IMR-90 (cell line): ENCODE measurements at regions of chr11 and their contacts with region 1.

Region 1: GRCh38 chr11:114262681-114263512 is 33.3 kb upstream of the NNMT start:
- DNase-seq: peak; percentile 54
- ATAC-seq: peak; percentile 91
- H3K4me3 ChIP-seq: no peak overlapping the region
- H3K27ac ChIP-seq: no peak overlapping the region
- H3K4me1 ChIP-seq: no peaks in the 10 kb centered on the region
- H3K27me3 ChIP-seq: peaks cover 43% of the 10 kb centered on the region
- CTCF ChIP-seq: peak; percentile 73
- POLR2A ChIP-seq: no peak
- RAD21 ChIP-seq: peak; percentile 83

Region 2: DNA sequence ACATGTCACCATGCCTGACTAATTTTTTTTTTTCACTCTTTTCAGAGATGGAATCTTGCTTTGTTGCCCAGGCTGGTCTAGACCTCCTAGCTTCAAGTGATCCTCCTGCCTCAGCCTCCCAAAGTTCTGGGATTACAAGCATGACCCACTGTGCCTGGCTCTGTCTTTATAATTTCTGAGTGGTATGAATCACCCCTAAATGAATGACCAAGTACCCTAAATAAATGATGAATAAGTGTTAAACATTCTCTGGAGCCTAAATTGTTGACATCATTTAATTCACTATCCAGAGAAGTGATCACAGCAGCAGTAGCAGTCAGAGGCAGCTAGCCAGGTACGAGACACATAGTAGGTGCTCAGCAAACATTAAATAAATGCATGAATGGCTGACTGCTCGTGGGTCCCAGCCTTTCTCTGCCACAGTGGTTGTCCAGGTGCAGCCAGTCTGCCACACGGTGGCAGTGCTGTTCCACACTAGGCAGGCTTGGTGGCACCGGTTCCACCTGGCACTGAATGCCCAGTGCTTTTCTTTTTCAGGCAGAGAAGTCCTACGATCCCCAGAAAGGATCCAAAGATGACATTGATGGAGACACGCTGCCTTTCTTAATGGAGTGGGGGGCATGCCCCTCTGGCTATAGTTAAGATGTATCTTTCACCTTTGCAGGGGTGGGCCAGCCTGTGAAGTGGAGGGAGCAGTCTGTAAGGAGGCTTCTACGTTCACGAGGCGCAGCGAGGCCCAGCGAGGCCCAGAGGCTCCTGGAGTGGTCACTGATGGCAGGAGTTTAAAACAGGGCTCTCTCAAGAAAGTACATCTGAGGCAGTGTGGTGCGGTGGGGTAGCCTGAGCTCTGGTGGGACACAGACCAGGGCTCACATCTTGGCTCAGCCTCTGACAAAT is 957.2 kb before region 1 on chr11:
- CTCF ChIA-PET with region 1: no interaction called
- POLR2A ChIA-PET with region 1: no interaction called
- dilution Hi-C with region 1: no loop called
- in situ Hi-C with region 1: no loop called
- intact Hi-C with region 1: loop called (anchors 5 kb)
- DNase-seq: peak; percentile 51
- ATAC-seq: peak; percentile 99
- H3K4me3 ChIP-seq: no peak overlapping the region
- H3K27ac ChIP-seq: no peak overlapping the region
- H3K4me1 ChIP-seq: no peaks in the 10 kb centered on the region
- H3K27me3 ChIP-seq: peaks cover 3% of the 10 kb centered on the region; the same call in 1 of the 2 replicates
- CTCF ChIP-seq: peak; percentile 96
- POLR2A ChIP-seq: peak; percentile 51; the same call in 1 of the 2 replicates
- RAD21 ChIP-seq: peak; percentile 99

Region 3: DNA sequence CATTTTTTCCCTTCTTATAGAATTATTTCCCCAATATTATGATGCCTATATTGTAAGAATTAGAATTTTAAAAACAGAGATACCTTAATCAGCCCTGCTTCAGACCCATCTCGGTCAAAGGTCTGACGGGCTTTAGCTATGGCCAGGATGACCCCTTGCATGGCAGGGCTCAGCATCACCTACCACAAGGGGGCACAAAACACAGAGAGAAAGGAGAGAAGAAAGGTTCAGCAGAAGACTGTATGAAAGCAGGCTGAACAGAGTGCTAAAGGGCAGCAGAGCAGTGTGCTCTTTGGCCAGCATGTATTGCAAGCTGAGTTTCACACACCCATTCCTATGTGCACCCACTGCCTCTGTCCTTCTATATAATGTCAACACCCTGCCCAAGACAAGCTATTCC is 456.5 kb before region 1 on chr11:
- CTCF ChIA-PET with region 1: interaction called, 6 read pairs
- POLR2A ChIA-PET with region 1: no interaction called
- dilution Hi-C with region 1: no loop called
- in situ Hi-C with region 1: no loop called
- intact Hi-C with region 1: loop called (anchors 1 kb)
- DNase-seq: peak; percentile 7
- ATAC-seq: peak; percentile 75
- H3K4me3 ChIP-seq: no peak overlapping the region
- H3K27ac ChIP-seq: no peak overlapping the region
- H3K4me1 ChIP-seq: no peaks in the 10 kb centered on the region
- H3K27me3 ChIP-seq: no peaks in the 10 kb centered on the region
- CTCF ChIP-seq: 0 out of 2 replicates have a peak, but pooled peaks have one; percentile 35
- POLR2A ChIP-seq: no peak
- RAD21 ChIP-seq: 0 out of 2 replicates have a peak, but pooled peaks have one; percentile 16

Region 4: DNA sequence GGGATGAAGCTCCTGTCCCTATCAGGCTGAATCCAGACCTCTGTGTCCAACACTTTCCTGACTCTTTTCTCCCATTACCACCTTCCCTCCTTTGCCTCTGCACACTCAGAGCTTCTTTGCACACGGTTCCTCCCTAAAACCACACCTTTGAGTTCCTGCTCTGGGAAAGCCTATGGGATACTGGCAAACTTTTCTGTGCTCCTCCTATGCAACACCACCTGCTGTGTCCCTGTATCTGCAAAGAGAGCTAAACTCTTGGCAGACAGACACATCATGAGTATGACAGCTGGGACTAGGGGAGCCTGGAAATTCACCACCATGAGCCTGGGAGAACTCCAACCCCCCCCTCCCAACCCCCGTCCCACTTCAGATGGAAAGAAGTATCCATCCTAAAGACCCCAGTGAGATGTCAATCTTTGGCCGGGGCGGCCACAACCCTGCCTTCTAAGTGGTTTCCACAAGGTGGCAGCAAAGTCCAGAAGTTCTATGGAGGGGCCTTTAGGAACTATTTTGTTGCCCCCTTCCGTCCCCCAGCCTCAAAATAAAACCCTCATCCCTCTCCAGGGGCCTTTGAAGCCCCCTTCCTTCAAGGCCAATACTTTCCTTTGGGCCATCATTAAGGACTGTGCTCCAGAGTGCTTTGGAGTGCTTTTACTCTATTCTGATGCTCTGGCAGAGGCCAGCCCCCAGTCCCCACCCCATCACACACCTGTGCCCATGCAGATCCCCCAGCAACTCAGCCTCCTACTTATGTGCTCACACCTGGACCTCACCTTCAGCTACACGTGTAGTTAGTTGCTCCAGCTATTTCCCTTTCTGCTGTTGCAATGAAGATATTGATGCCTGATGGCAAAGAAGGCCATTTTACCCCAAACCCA is 268.6 kb before region 1 on chr11:
- CTCF ChIA-PET with region 1: interaction called, 43 read pairs
- POLR2A ChIA-PET with region 1: no interaction called
- dilution Hi-C with region 1: no loop called
- in situ Hi-C with region 1: no loop called
- intact Hi-C with region 1: loop called (anchors 1 kb)
- DNase-seq: no peak
- ATAC-seq: no peak; the same call in none of the 2 replicates
- H3K4me3 ChIP-seq: no peak overlapping the region
- H3K27ac ChIP-seq: no peak overlapping the region
- H3K4me1 ChIP-seq: no peaks in the 10 kb centered on the region
- H3K27me3 ChIP-seq: no peaks in the 10 kb centered on the region; the same call in 1 of the 2 replicates
- CTCF ChIP-seq: peak; percentile 55
- POLR2A ChIP-seq: no peak
- RAD21 ChIP-seq: peak; percentile 65

Region 5: DNA sequence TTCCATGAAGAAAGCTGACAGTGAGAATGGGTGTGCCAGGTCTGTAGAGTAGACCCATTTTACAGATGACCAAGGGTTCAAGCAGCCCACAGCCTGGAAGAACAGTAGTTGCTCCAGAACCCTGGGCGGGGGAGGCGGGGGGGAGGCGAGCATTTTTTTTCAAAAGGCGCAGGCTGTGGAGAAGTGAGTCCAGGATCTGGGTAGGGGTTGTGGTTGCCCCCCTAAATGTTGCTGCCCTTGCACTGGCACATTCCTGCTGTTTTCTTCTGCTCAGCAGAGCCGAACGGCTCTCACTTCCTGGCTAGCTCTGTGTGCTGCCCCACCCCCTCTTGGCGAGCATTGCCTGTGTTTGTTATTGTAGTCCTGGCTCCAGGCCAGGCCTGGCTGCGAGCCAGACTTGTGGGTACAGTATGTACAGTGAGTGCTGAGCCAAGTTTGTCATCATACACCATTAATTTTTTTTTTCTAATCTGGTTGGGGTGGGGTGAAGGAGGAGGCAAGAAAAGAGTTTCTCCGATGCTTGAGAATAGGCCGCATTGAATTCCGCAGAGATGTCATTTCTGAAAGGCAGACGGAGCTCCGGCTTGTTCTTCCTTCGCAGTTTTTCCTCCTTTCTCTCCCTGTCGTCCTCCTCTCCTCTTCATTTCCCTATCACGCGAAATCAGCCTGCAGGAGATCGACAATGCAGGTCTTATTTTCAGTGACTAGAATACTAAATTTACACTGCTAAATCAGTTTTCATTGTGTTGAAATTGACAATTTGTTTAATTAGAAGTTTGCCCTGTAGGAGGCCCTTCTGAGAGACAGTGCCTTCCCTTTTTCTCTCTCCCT is 102.9 kb before region 1 on chr11:
- CTCF ChIA-PET with region 1: no interaction called
- POLR2A ChIA-PET with region 1: no interaction called
- dilution Hi-C with region 1: no loop called
- in situ Hi-C with region 1: no loop called
- intact Hi-C with region 1: loop called (anchors 5 kb)
- DNase-seq: peak; percentile 90
- ATAC-seq: peak; percentile 73
- H3K4me3 ChIP-seq: no peak overlapping the region
- H3K27ac ChIP-seq: peak overlapping the region; percentile 31; the same call in 1 of the 2 replicates
- H3K4me1 ChIP-seq: peaks cover 16% of the 10 kb centered on the region; the same call in 1 of the 2 replicates
- H3K27me3 ChIP-seq: peaks cover 50% of the 10 kb centered on the region
- CTCF ChIP-seq: no peak
- POLR2A ChIP-seq: no peak
- RAD21 ChIP-seq: no peak; the same call in none of the 2 replicates